CD8-positive, alpha-beta memory T cell (primary cell): ENCODE measurements at regions of chr14 and their contacts with region 1.

Region 1: DNA sequence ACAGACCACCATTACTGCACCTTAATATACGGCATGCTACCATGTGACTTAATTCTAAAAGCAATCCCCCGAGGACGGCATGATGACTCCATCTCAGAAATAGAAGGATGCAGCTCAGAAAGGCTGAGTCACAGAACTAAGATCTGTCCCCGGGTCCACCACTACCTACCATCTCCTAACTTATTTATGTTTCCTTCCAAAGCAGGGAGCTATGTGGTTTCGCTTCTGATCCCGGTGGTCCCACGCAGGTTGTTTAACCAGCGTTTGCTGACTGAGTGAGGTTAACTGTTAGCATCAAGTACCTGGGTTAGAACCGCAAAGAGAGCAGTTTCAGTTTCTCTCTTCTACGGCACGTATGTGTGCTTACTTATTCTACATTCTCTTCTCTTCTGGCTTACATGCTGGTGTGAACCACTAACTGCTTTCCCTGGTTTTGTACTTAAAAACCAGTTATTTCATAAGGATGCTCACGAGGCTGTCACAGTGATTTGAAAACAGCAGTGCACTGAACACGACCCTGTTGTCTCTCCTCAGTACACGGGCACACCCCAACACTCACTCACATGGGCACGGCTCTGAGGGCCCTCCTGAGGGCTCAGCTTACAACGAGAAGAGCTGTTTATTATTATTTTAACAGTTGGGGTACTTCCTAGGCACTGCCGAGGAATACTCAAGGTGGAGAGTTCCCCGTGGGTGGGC is 66.7 kb downstream of the CCDC88C start:
- DNase-seq: peak; percentile 40 to 80 (median 78)
- H3K4me3 ChIP-seq: peak overlapping the region; percentile 62
- H3K4me3 Mint-ChIP-seq: peak overlapping the region; percentile 77 to 93 (median 85)
- H3K27ac ChIP-seq: peak overlapping the region; percentile 66
- H3K27ac Mint-ChIP-seq: peak overlapping the region; percentile 91 to 99 (median 98)
- H3K4me1 ChIP-seq: peaks cover 86% of the 10 kb centered on the region
- H3K4me1 Mint-ChIP-seq: peaks cover 91 to 97% (median 95%) of the 10 kb centered on the region in 3 donors
- H3K27me3 ChIP-seq: no peaks in the 10 kb centered on the region
- H3K27me3 Mint-ChIP-seq: no peaks in the 10 kb centered on the region

Region 2: DNA sequence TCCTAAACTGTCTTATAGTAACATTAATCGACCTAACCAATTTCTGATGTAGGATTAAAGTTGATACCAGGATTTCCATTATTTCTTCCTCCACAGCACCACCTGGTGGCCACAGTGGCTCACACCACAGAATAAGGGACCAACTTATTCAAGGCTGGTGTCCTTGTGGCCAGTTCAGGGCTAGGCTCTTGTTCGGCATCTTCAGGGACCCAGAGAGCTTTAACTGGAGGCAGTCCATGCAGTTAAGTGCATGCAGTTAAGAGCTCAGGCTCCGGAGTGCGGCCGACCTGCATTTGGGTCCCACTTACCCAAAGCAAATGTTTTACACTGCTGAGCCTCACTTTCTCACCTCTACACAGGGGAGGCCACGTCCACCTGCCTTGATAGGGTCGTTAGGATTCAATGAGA is 64.4 kb before region 1 on chr14:
- CTCF ChIA-PET with region 1: no interaction called
- POLR2A ChIA-PET with region 1: no interaction called
- DNase-seq: peak; percentile 62 to 82 (median 69)
- H3K4me3 ChIP-seq: no peak overlapping the region
- H3K4me3 Mint-ChIP-seq: no peak overlapping the region
- H3K27ac ChIP-seq: no peak overlapping the region
- H3K27ac Mint-ChIP-seq: peak overlapping the region; percentile 3 to 73 (median 54)
- H3K4me1 ChIP-seq: no peaks in the 10 kb centered on the region
- H3K4me1 Mint-ChIP-seq: peaks cover 8 to 12% (median 11%) of the 10 kb centered on the region in 3 donors
- H3K27me3 ChIP-seq: no peaks in the 10 kb centered on the region
- H3K27me3 Mint-ChIP-seq: peaks cover 0 to 2% of the 10 kb centered on the region in 2 donors

Region 3: GRCh38 chr14:91332151-91332985 is 18.6 kb before region 1 on chr14:
- CTCF ChIA-PET with region 1: interaction called, 52 read pairs
- POLR2A ChIA-PET with region 1: interaction called, 3 read pairs
- DNase-seq: no peak
- H3K4me3 ChIP-seq: no peak overlapping the region
- H3K4me3 Mint-ChIP-seq: peak overlapping the region in 5 of 7 donors; percentile 17 to 56 (median 44)
- H3K27ac ChIP-seq: no peak overlapping the region
- H3K27ac Mint-ChIP-seq: peak overlapping the region; percentile 88 to 98 (median 94)
- H3K4me1 ChIP-seq: peaks cover 65% of the 10 kb centered on the region
- H3K4me1 Mint-ChIP-seq: peaks cover 57 to 78% (median 69%) of the 10 kb centered on the region in 3 donors
- H3K27me3 ChIP-seq: no peaks in the 10 kb centered on the region
- H3K27me3 Mint-ChIP-seq: peaks cover 0 to 6% of the 10 kb centered on the region in 2 donors

Region 4: DNA sequence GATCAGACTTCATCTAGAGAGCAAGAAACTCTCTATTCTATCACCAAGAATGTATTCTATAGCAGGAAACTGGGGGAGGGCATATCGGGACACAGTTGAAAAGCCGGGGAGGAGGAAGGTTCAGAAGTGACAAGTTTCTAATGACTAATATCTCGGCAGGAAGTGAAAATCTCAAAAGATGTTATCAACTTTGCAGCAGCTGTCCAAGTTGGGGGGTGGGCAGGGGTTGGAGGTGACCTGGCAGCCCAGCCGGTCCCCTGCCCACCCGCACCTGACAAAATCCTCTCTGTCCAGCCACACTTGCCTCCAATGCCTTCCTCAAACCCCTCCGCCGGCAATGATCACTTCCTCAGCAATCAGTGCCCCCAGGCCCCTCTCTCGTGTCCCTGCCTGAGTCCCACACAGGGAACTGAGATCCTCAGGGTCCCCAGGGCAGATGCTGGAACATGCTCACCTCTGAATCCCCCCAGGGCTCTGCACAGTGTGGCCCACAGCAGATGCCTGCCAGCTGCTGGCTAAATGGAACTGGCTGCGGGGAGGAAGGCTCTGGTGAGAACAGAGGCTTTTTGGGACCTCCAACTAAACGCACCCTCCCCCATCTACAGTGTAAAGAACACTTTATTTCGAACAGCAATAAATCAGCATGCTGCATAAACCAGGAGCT is 22.8 kb after region 1 on chr14:
- CTCF ChIA-PET with region 1: interaction called, 95 read pairs
- POLR2A ChIA-PET with region 1: interaction called, 17 read pairs
- DNase-seq: peak in 4 of 5 donors; percentile 37 to 68 (median 51)
- H3K4me3 ChIP-seq: peak overlapping the region; percentile 68
- H3K4me3 Mint-ChIP-seq: peak overlapping the region; percentile 71 to 90 (median 85)
- H3K27ac ChIP-seq: peak overlapping the region; percentile 63
- H3K27ac Mint-ChIP-seq: peak overlapping the region; percentile 84 to 99 (median 95)
- H3K4me1 ChIP-seq: peaks cover 99% of the 10 kb centered on the region
- H3K4me1 Mint-ChIP-seq: peaks cover 94 to 100% (median 100%) of the 10 kb centered on the region in 3 donors
- H3K27me3 ChIP-seq: no peaks in the 10 kb centered on the region
- H3K27me3 Mint-ChIP-seq: no peaks in the 10 kb centered on the region

Region 5: GRCh38 chr14:91396959-91397815 is 46.2 kb after region 1 on chr14:
- CTCF ChIA-PET with region 1: interaction called, 48 read pairs
- POLR2A ChIA-PET with region 1: interaction called, 9 read pairs
- DNase-seq: peak in 4 of 5 donors; percentile 52 to 77 (median 70)
- H3K4me3 ChIP-seq: peak overlapping the region; percentile 44
- H3K4me3 Mint-ChIP-seq: peak overlapping the region; percentile 88 to 100 (median 99)
- H3K27ac ChIP-seq: peak overlapping the region; percentile 43
- H3K27ac Mint-ChIP-seq: peak overlapping the region; percentile 91 to 100 (median 96)
- H3K4me1 ChIP-seq: peaks cover 95% of the 10 kb centered on the region
- H3K4me1 Mint-ChIP-seq: peaks cover 86 to 99% (median 97%) of the 10 kb centered on the region in 3 donors
- H3K27me3 ChIP-seq: no peaks in the 10 kb centered on the region
- H3K27me3 Mint-ChIP-seq: peaks cover 0 to 1% of the 10 kb centered on the region in 2 donors

Region 6: DNA sequence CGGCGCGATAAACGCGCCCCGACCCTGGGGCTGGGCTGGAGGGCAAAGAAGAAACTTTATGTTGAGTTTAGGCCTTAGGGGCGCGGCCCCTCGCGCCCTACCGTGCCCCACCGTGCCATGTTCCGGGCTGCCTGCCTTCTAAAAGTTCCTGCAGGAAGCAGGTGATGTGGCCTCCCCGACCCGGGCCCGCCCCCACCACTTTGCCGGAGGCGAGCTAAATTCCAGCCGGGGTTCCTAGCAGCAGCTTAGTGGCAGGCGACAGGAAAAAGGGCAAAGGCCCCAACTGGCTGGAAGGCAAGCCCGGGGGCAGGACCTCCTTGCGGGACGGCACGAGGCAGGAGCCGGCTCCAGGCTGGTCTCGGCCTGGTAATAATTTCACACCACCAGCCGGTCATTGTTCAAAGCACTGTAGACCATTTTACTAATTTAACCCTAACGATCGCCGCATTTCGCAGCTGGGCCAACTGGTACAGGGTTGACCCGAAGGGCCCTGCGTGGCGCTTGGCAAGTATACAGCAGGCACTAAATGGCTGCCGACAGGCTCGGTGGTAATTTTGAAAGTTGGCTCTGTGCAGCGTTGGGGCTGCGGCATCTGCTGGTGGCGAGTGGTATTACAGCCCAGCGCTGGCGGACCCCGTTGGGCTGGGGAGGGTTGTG is 67.6 kb after region 1 on chr14:
- CTCF ChIA-PET with region 1: interaction called, 73 read pairs
- POLR2A ChIA-PET with region 1: interaction called, 35 read pairs
- DNase-seq: peak; percentile 73 to 88 (median 83)
- H3K4me3 ChIP-seq: peak overlapping the region; percentile 60
- H3K4me3 Mint-ChIP-seq: peak overlapping the region; percentile 81 to 93 (median 86)
- H3K27ac ChIP-seq: peak overlapping the region; percentile 29
- H3K27ac Mint-ChIP-seq: peak overlapping the region; percentile 55 to 97 (median 94)
- H3K4me1 ChIP-seq: peaks cover 30% of the 10 kb centered on the region
- H3K4me1 Mint-ChIP-seq: peaks cover 34 to 48% (median 37%) of the 10 kb centered on the region in 3 donors
- H3K27me3 ChIP-seq: no peaks in the 10 kb centered on the region
- H3K27me3 Mint-ChIP-seq: no peaks in the 10 kb centered on the region

Region 7: DNA sequence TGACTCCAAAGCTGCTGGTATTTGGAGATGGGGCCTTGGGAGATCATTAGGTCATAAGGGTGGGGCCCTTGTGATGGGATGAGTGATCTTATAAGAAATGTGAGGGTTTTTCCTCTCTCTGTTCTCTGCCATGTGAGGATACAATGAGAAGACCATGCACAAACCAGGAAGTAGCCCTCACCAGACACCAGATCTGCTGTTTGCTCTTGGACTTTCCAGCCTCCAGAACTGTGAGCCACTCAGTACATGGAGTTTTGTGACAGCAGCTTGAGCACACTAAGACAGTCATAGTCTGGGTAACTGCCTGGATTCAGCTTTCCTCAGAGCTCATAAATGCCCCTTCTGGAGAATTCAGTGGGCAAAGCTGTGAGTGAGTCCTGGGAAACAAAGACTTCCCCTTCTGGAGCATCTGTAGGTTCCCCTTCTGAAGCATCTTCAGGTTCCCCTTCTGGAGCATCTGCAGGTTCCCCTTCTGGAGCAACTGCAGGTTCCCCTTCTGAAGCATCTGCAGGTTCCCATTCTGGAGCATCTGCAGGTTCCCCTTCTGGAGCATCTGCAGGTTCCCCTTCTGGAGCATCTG is 170.2 kb after region 1 on chr14:
- CTCF ChIA-PET with region 1: no interaction called
- POLR2A ChIA-PET with region 1: no interaction called
- DNase-seq: no peak
- H3K4me3 ChIP-seq: no peak overlapping the region
- H3K4me3 Mint-ChIP-seq: no peak overlapping the region
- H3K27ac ChIP-seq: no peak overlapping the region
- H3K27ac Mint-ChIP-seq: no peak overlapping the region
- H3K4me1 ChIP-seq: no peaks in the 10 kb centered on the region
- H3K4me1 Mint-ChIP-seq: peaks cover 0 to 4% (median 0%) of the 10 kb centered on the region in 3 donors
- H3K27me3 ChIP-seq: no peaks in the 10 kb centered on the region
- H3K27me3 Mint-ChIP-seq: peaks cover 1 to 15% of the 10 kb centered on the region in 2 donors